ENCODE measurements at regions of chr11 and their contacts with region 1.

Region 1: DNA sequence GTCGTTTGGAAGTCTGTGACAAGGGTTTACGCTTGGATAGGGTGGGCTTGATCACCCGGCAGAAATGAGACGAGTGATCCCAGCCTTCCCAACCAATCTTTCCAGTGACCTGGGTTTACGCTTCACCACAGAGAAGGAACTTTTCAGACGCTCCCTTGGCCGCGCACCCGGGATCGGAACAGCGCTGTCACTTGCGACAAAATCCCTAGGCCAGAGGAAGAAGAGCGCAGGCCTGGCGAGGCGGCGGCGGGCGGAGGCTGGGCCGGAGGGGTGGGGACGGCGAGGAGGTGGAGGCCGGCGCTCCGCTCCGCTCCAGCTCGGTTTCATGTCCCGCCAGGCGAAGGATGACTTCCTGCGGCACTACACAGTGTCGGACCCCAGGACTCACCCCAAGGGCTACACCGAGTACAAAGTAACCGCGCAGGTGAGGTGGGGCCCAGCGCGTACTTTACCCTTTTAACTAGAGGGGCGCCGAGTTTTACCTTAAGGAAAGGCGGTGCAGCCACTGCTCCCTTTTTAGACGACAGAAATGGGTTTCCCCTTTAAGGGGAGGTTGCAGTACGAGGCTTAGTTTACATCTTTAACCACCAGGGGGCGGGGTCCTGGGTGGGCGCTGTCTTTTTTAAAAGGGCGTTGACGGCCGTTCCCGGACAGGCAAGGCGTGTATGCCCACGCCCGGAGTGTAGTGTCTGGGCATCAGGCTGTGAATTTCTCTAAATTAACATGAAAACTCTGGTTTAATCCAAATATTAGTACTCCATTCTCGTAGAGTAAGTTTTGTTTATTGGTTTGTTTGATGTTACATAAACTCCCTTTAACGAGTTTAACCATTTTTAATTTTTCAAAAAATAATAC is at the start of gene SNX15:
- DNase-seq: peak; percentile 98
- H3K4me3 Mint-ChIP-seq: peak within 1 kb of the TSS; percentile 74
- H3K27ac Mint-ChIP-seq: peak within 1 kb of the TSS; percentile 77
- H3K4me1 Mint-ChIP-seq: peaks cover 16% of the 10 kb centered on the region
- H3K27me3 Mint-ChIP-seq: no peaks in the 10 kb centered on the region
- total RNA-seq, gene SNX15: 15.9 and 17.9 TPM in 2 replicates

Region 2: GRCh38 chr11:64713031-64713780 is 314.2 kb before region 1 on chr11:
- intact Hi-C with region 1: no loop called
- DNase-seq: peak; percentile 70
- H3K4me3 Mint-ChIP-seq: no peak overlapping the region
- H3K27ac Mint-ChIP-seq: no peak overlapping the region
- H3K4me1 Mint-ChIP-seq: peaks cover 2% of the 10 kb centered on the region
- H3K27me3 Mint-ChIP-seq: peaks cover 75% of the 10 kb centered on the region

Region 3: DNA sequence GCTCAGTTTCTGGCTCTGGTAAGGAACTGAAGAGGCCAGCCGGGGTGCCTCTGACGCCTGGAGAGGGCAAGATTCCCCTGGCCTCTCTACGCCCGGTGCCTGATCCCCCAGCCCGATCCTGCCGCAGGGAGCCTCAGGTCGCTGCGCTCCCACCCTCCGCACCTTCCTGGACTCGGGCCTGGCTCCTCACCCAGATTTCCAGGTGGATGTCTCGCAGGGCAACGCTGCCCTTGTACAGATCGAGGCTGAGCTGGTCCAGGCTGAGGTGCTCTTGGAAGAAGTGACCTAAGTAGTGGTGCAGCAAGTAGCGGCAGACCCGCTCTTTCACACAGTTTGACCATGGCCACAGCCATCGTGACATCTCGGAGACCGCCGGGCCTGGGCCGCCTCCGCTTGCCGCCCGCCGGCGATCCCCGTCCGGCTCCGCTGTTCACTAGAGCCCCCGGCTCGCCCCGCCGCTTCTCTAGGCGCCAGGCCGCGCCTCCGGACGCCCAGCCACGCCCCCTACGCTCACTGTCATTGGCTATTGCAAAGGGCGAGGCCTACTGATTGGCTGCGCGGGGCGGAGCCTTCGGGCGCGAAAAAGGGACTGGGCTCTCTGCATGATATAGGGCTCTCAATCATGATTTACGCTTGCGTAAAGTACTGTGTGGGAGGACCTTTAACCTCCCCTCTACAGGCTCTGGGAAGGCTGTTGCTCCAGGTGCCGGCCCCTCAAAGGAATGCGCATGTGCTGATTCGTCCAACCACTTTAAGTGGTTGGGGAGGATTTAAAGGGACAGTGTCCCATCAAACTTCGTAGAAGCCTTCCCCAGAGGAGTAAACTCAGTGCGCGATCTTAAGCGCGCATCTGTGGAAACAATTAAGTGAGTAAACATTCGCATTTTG is 110.4 kb before region 1 on chr11 and contains the start of gene ATG2A:
- intact Hi-C with region 1: loop called (anchors 1 kb)
- DNase-seq: peak; percentile 100
- H3K4me3 Mint-ChIP-seq: peak within 1 kb of the TSS; percentile 90
- H3K27ac Mint-ChIP-seq: peak within 1 kb of the TSS; percentile 92
- H3K4me1 Mint-ChIP-seq: peaks cover 23% of the 10 kb centered on the region
- H3K27me3 Mint-ChIP-seq: no peaks in the 10 kb centered on the region
- total RNA-seq, gene ATG2A: 22.5 and 23.1 TPM in 2 replicates

Region 4: DNA sequence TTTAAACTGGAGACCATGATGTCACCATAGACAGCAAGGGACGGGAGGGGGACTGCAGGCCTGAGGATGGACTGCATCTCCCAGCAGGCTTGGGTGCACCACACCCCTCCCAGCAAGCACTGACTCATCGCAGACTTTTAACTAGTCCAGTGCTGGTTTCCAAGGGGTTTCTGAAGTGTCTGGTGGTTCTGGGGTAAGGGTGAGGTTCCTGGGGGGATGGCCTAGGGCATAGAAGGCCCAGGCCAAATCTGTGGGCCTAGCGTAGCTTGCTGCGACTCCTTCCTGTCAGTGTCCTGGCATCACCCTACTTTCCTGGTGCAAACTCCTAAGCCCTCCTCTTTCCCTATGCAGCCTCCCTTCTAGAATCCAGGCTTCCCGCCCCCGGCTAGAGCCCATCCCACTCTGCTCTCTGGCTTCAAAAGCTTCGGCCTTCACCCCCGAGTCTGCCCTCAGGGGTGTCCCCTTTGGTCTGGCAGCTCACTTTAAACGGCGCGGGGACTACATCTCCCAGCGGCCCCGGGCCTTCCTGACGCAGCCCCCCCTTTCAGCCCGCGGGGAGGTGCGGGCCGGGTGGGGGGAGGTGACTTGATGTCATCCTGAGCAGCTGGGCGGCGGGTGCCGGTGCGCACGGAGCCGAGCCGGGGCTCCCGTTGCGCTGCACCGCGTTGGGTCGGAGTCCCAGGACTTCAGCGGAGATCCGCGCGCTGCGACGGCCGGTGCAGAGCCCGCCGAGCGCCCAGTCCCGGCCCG is 103.2 kb before region 1 on chr11 and contains the start of gene PPP2R5B:
- intact Hi-C with region 1: loop called (anchors 1 kb)
- DNase-seq: peak; percentile 98
- H3K4me3 Mint-ChIP-seq: peak within 1 kb of the TSS; percentile 91
- H3K27ac Mint-ChIP-seq: peak within 1 kb of the TSS; percentile 99
- H3K4me1 Mint-ChIP-seq: peaks cover 10% of the 10 kb centered on the region
- H3K27me3 Mint-ChIP-seq: no peaks in the 10 kb centered on the region
- total RNA-seq, gene PPP2R5B: 11.4 and 16.7 TPM in 2 replicates

Region 5: GRCh38 chr11:65040847-65041621 is 13.6 kb after region 1 on chr11 and contains the start of gene SAC3D1:
- intact Hi-C with region 1: loop called (anchors 1 kb)
- DNase-seq: peak; percentile 98
- H3K4me3 Mint-ChIP-seq: peak within 1 kb of the TSS; percentile 93
- H3K27ac Mint-ChIP-seq: peak within 1 kb of the TSS; percentile 95
- H3K4me1 Mint-ChIP-seq: peaks cover 20% of the 10 kb centered on the region
- H3K27me3 Mint-ChIP-seq: no peaks in the 10 kb centered on the region
- total RNA-seq, gene SAC3D1: 16.3 and 18.0 TPM in 2 replicates

Region 6: GRCh38 chr11:65083834-65084597 is 56.6 kb after region 1 on chr11 and contains the starts of genes CDCA5 and ZFPL1:
- intact Hi-C with region 1: loop called (anchors 1 kb)
- DNase-seq: peak; percentile 100
- H3K4me3 Mint-ChIP-seq: peak within 1 kb of the TSS; percentile 99
- H3K27ac Mint-ChIP-seq: peak within 1 kb of the TSS; percentile 99
- H3K4me1 Mint-ChIP-seq: peaks cover 46% of the 10 kb centered on the region
- H3K27me3 Mint-ChIP-seq: peaks cover 2% of the 10 kb centered on the region
- total RNA-seq, gene CDCA5: 94.4 and 95.1 TPM in 2 replicates
- total RNA-seq, gene ZFPL1: 33.3 and 34.7 TPM in 2 replicates

Region 7: GRCh38 chr11:65111744-65112414 is 84.4 kb after region 1 on chr11 and contains the start of gene TM7SF2:
- intact Hi-C with region 1: loop called (anchors 5 kb)
- DNase-seq: peak; percentile 98
- H3K4me3 Mint-ChIP-seq: peak within 1 kb of the TSS; percentile 98
- H3K27ac Mint-ChIP-seq: peak within 1 kb of the TSS; percentile 93
- H3K4me1 Mint-ChIP-seq: peaks cover 25% of the 10 kb centered on the region
- H3K27me3 Mint-ChIP-seq: no peaks in the 10 kb centered on the region
- total RNA-seq, gene TM7SF2: 28.2 and 28.9 TPM in 2 replicates

Region 8: GRCh38 chr11:65662799-65663638 is 635.6 kb after region 1 on chr11 and contains the start of gene RELA:
- intact Hi-C with region 1: loop called (anchors 2 kb)
- DNase-seq: peak; percentile 97
- H3K4me3 Mint-ChIP-seq: peak within 1 kb of the TSS; percentile 92
- H3K27ac Mint-ChIP-seq: peak within 1 kb of the TSS; percentile 93
- H3K4me1 Mint-ChIP-seq: peaks cover 24% of the 10 kb centered on the region
- H3K27me3 Mint-ChIP-seq: no peaks in the 10 kb centered on the region
- total RNA-seq, gene RELA: 95.7 and 98.2 TPM in 2 replicates